Heart right ventricle (tissue), 16 donors: ENCODE measurements at regions of chr7 and their contacts with region 1.

Region 1: DNA sequence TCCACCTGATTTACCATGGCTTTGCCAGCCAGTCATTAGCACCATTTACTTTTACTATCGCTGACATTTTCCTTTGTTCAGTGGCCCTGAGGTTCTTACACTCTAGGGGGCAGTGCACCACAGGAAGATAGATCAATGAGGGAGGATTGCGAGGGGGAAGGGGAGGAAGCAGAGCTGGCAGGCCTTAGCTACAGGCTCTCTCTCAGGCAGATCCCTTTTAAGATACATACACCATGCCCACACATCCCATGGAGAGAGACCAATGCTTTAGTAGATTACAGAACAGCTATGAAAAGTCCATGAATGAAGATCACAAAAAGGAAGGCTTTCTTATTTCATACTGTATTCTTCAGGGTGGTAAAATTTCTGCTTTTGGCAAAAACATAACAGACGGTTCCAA is 47.4 kb downstream of the DENND11 start:
- DNase-seq: peak in 1 of 2 donors; percentile 73
- ATAC-seq: peak; percentile 56 to 85 (median 74)
- H3K4me3 ChIP-seq: no peak overlapping the region
- H3K27ac ChIP-seq: peak overlapping the region in 2 of 10 donors; percentile 17 to 22
- H3K4me1 ChIP-seq: peaks cover 0 to 23% (median 17%) of the 10 kb centered on the region in 9 donors
- H3K27me3 ChIP-seq: no peaks in the 10 kb centered on the region
- CTCF ChIP-seq: peak; percentile 29 to 76 (median 70)

Region 2: DNA sequence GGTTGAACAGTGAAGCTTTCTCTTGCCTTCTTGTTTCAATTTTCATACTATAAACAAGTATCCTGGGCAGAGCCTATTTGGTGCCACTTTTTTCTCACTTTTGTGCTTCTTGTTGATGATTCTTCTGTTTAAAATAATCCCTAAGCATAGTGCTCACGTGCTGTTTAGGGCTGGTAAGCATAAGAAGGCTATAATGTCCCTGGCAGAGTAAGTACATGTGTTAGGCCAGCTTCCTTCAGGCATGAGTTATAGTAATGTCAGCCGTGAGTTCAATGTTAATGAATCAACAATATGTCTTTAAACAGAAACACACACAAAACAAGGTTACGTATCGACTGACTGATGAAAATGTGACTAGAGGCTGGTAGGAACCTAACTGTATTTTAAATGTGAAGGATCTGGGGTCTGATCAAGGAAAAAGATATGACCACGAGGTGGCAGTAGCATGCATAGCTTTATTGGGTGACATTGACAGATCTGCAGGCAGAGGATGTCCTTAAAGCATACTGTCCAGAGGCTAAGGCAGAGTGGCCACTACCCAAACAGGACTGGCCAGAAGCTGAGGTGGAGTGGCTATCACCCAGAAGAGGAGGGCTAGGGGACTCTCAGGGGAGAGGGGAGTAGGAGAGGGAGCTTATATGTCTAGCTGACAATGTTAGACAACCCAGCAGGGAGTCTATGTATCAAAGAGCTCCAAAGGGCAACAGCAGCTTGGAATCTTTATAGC is 843.6 kb before region 1 on chr7:
- intact Hi-C with region 1: loop called in 2 of 10 experiments (anchors 10 kb)
- DNase-seq: peak in 1 of 2 donors; percentile 69
- ATAC-seq: peak; percentile 79 to 93 (median 91)
- H3K4me3 ChIP-seq: no peak overlapping the region
- H3K27ac ChIP-seq: no peak overlapping the region
- H3K4me1 ChIP-seq: peaks cover 0 to 13% (median 0%) of the 10 kb centered on the region in 9 donors
- H3K27me3 ChIP-seq: no peaks in the 10 kb centered on the region
- CTCF ChIP-seq: peak; percentile 51 to 84 (median 80)

Region 3: GRCh38 chr7:141533149-141533949 is 121.2 kb before region 1 on chr7:
- intact Hi-C with region 1: loop called in 1 of 10 experiments (anchors 5 kb)
- DNase-seq: peak; percentile 52 to 58
- ATAC-seq: peak; percentile 60 to 94 (median 83)
- H3K4me3 ChIP-seq: no peak overlapping the region
- H3K27ac ChIP-seq: peak overlapping the region in 4 of 10 donors; percentile 1 to 42 (median 21)
- H3K4me1 ChIP-seq: peaks cover 0 to 20% (median 0%) of the 10 kb centered on the region in 9 donors
- H3K27me3 ChIP-seq: peaks cover 0 to 11% (median 0%) of the 10 kb centered on the region in 7 donors
- CTCF ChIP-seq: peak; percentile 91 to 99 (median 95)

Region 4: GRCh38 chr7:141551094-141551781 is 103.3 kb before region 1 on chr7 and contains the start of gene AGK:
- intact Hi-C with region 1: loop called in 4 of 10 experiments (anchors 10 kb)
- DNase-seq: peak; percentile 78 to 79
- ATAC-seq: peak; percentile 84 to 97 (median 93)
- H3K4me3 ChIP-seq: peak within 1 kb of the TSS; percentile 85 to 100 (median 97)
- H3K27ac ChIP-seq: peak within 1 kb of the TSS; percentile 20 to 90 (median 86)
- H3K4me1 ChIP-seq: peaks cover 4 to 26% (median 17%) of the 10 kb centered on the region in 9 donors
- H3K27me3 ChIP-seq: no peaks in the 10 kb centered on the region
- CTCF ChIP-seq: peak in 1 of 9 donors; percentile 6
- total RNA-seq, gene AGK: 27.1 to 45.1 (median 39.7) TPM

Region 5: DNA sequence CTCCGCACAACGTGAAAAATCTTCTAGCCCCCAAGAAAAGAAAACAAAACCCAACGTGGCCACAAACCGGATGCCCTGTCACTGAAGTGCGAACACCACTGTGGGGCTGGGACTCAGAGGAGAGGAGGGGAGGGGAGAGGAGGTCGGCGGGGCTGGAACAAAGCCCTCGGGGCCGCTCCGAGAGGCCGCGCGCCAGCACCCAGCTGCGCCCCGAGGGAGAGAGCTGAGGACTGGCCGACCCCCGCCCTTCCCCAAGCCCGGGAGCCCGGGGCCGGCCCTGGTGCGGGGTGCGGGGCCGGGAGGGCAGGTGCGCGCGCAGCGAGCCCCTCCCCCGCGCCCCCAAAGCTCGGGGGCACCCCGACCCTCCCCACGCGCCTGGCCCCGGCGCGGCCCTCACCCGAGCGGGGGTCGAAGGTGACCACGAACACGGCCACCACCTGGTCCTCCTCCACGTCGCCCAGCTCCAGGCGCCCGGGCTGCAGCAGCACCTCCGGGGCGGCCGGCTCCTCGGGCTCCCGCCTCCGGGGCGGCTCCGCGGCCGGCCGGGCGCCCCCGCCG is 47.0 kb after region 1 on chr7:
- intact Hi-C with region 1: loop called in 1 of 10 experiments (anchors 5 kb)
- DNase-seq: peak; percentile 45 to 46
- ATAC-seq: peak; percentile 53 to 84 (median 71)
- H3K4me3 ChIP-seq: peak overlapping the region; percentile 70 to 92 (median 84)
- H3K27ac ChIP-seq: peak overlapping the region; percentile 71 to 91 (median 86)
- H3K4me1 ChIP-seq: peaks cover 0 to 49% (median 32%) of the 10 kb centered on the region in 9 donors
- H3K27me3 ChIP-seq: no peaks in the 10 kb centered on the region
- CTCF ChIP-seq: no peak